GM10248 (cell line): ENCODE measurements at regions of chr6 and their contacts with region 1.

Region 1: DNA sequence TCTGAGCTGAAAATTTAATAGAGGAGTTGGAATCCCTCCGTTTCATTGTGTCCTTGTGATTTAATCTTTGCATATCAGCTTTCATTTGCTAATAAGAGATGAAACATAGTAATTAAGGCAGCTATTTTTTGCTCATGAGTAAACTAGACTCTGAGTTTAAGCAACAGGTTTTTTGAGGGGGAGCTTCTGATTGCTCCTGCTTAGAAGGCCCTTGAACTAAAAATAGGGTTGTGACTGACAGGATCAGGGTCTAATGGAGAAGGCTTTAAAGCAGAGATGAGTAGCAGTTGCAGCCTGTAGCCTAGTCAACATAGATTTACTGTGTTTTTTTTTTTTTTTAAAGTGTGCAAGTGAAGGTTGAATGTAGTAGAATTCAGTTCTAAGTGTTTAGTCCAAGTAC is 17.4 kb downstream of the HSF2 start:
- DNase-seq: no peak
- CTCF ChIP-seq: no peak

Region 2: GRCh38 chr6:121917834-121918559 is 498.8 kb before region 1 on chr6:
- CTCF ChIA-PET with region 1: no interaction called
- POLR2A ChIA-PET with region 1: no interaction called
- DNase-seq: no peak
- CTCF ChIP-seq: no peak

Region 3: GRCh38 chr6:122432816-122433215 is 16.0 kb after region 1 on chr6:
- CTCF ChIA-PET with region 1: interaction called, 14 read pairs
- POLR2A ChIA-PET with region 1: interaction called, 3 read pairs
- DNase-seq: no peak
- CTCF ChIP-seq: no peak

Region 4: GRCh38 chr6:122520179-122520578 is 103.4 kb after region 1 on chr6:
- CTCF ChIA-PET with region 1: no interaction called
- POLR2A ChIA-PET with region 1: no interaction called
- DNase-seq: no peak
- CTCF ChIP-seq: no peak